Panc1 (cell line): ENCODE measurements at regions of chr11 and their contacts with region 1.

Region 1: GRCh38 chr11:70246196-70246595 is 24.3 kb upstream of the PPFIA1 start:
- DNase-seq: no peak
- ATAC-seq: no peak
- H3K4me3 ChIP-seq: no peak overlapping the region
- H3K27ac ChIP-seq: no peak overlapping the region
- H3K4me1 ChIP-seq: peaks cover 13% of the 10 kb centered on the region; the same call in 1 of the 2 replicates
- H3K27me3 ChIP-seq: no peaks in the 10 kb centered on the region
- CTCF ChIP-seq: no peak

Region 2: DNA sequence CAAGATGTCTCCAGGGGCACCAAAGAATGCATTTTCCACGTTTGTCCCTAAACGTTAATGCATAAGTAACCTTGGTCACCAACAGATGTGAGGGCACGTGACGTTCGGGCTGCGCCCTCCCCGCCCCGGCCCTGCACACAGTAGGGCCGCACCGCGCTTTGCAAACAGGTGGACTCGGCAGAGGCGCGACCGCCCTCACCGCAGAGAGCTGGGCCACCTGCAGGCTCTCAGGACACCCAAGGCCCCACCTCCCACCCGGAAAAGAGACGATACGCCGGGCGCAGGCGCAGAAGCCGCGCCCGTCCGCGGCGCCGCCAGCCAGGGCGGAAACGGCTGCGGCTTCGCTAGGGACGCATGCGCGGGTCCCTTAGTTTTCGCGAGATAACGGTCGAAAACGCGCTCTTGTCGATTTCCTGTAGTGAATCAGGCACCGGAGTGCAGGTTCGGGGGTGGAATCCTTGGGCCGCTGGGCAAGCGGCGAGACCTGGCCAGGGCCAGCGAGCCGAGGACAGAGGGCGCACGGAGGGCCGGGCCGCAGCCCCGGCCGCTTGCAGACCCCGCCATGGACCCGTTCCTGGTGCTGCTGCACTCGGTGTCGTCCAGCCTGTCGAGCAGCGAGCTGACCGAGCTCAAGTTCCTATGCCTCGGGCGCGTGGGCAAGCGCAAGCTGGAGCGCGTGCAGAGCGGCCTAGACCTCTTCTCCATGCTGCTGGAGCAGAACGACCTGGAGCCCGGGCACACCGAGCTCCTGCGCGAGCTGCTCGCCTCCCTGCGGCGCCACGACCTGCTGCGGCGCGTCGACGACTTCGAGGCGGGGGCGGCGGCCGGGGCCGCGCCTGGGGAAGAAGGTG is 43.1 kb before region 1 on chr11 and contains the start of gene FADD:
- CTCF ChIA-PET with region 1: interaction called, 13 read pairs
- POLR2A ChIA-PET with region 1: no interaction called
- in situ Hi-C with region 1: no loop called
- intact Hi-C with region 1: no loop called
- DNase-seq: peak; percentile 88
- ATAC-seq: peak; percentile 90
- H3K4me3 ChIP-seq: peak within 1 kb of the TSS; percentile 85 to 94
- H3K27ac ChIP-seq: peak within 1 kb of the TSS; percentile 90
- H3K4me1 ChIP-seq: peaks cover 21% of the 10 kb centered on the region
- H3K27me3 ChIP-seq: no peaks in the 10 kb centered on the region
- CTCF ChIP-seq: no peak
- total RNA-seq, gene FADD: 47.3 TPM

Region 3: DNA sequence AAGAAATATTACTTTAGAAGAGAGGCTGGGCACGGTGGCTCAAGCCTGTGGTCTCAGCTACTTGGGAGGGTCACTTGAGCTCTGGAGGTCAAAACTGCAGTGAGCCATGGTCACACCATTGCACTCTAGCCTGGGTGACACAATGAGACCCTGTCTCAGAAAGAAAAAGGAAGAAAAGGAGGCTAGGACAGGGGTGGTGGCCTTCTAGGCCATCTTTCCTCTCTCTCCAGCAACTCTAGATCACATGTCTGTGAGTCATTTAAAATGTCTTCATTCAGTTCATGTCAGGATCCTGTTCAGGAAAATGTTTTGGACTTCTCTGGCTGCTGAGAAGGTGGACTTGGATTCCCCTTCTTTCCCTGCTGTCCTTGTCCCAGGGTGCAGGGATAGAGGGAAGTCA is 77.6 kb after region 1 on chr11:
- CTCF ChIA-PET with region 1: no interaction called
- POLR2A ChIA-PET with region 1: no interaction called
- in situ Hi-C with region 1: no loop called
- intact Hi-C with region 1: no loop called
- DNase-seq: no peak
- ATAC-seq: no peak
- H3K4me3 ChIP-seq: no peak overlapping the region
- H3K27ac ChIP-seq: no peak overlapping the region
- H3K4me1 ChIP-seq: no peaks in the 10 kb centered on the region; the same call in 1 of the 2 replicates
- H3K27me3 ChIP-seq: no peaks in the 10 kb centered on the region
- CTCF ChIP-seq: no peak